Activated naive CD4-positive, alpha-beta T cell treated with anti-CD3 and anti-CD28 coated beads for 36 hours (primary cell): ENCODE measurements at regions of chr15 and their contacts with region 1.

Region 1: GRCh38 chr15:60478566-60479360 is at the start of gene ICE2:
- DNase-seq: peak; percentile 98
- H3K4me3 Mint-ChIP-seq: peak within 1 kb of the TSS; percentile 93
- H3K27ac Mint-ChIP-seq: peak within 1 kb of the TSS; percentile 94
- H3K4me1 Mint-ChIP-seq: peaks cover 44% of the 10 kb centered on the region
- H3K27me3 Mint-ChIP-seq: no peaks in the 10 kb centered on the region
- total RNA-seq, gene ICE2: 75.2 to 76.7 TPM

Region 2: GRCh38 chr15:60006203-60006862 is 472.4 kb before region 1 on chr15:
- CTCF ChIA-PET with region 1: no interaction called
- intact Hi-C with region 1: loop called (anchors 10 kb)
- DNase-seq: peak; percentile 83
- H3K4me3 Mint-ChIP-seq: peak overlapping the region; percentile 82
- H3K27ac Mint-ChIP-seq: peak overlapping the region; percentile 68
- H3K4me1 Mint-ChIP-seq: peaks cover 26% of the 10 kb centered on the region
- H3K27me3 Mint-ChIP-seq: peaks cover 87% of the 10 kb centered on the region

Region 3: DNA sequence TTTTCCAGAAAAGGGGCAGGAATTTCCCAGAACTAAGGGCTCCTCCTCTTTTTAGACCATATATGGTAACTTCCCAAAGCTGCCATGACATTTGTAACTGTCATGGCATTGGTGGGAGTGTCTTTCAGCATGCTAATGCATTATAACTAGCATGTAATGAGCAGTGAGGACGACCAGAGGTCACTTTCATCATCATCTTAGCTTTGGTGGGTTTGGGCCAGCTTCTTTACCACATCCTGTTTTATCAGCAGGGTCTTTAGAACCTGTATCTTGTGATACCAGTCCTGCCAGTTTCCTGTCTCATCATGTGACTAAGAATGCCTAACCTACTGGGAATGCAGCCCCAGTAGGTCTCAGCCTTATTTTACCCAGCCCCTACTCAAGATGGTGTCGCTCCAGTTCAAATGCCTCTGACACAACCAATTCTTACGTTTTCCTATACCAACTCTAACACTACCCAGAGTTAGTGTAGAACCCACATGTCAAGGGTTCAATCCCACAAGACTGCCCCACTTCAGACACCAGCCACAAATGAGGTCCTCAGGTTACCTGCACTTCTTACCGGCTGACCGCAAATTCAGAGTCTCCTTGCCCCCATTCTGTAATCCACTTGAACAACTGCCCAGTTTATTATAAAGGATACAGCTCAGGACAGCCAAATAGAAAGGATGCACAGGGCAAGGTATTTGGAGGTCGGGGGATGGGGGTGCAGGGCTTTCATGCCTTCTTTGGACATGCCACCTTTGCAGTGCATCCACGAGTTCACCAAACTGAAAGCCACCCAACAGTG is 457.0 kb before region 1 on chr15:
- CTCF ChIA-PET with region 1: no interaction called
- intact Hi-C with region 1: no loop called
- DNase-seq: no peak
- H3K4me3 Mint-ChIP-seq: no peak overlapping the region
- H3K27ac Mint-ChIP-seq: no peak overlapping the region
- H3K4me1 Mint-ChIP-seq: peaks cover 19% of the 10 kb centered on the region
- H3K27me3 Mint-ChIP-seq: peaks cover 7% of the 10 kb centered on the region

Region 4: GRCh38 chr15:60397772-60398445 is 80.9 kb before region 1 on chr15 and contains the start of gene ANXA2:
- CTCF ChIA-PET with region 1: no interaction called
- intact Hi-C with region 1: loop called (anchors 1 kb)
- DNase-seq: peak; percentile 80
- H3K4me3 Mint-ChIP-seq: peak within 1 kb of the TSS; percentile 72
- H3K27ac Mint-ChIP-seq: peak within 1 kb of the TSS; percentile 57
- H3K4me1 Mint-ChIP-seq: peaks cover 24% of the 10 kb centered on the region
- H3K27me3 Mint-ChIP-seq: no peaks in the 10 kb centered on the region
- total RNA-seq, gene ANXA2: 16.9 to 18.0 TPM

Region 5: DNA sequence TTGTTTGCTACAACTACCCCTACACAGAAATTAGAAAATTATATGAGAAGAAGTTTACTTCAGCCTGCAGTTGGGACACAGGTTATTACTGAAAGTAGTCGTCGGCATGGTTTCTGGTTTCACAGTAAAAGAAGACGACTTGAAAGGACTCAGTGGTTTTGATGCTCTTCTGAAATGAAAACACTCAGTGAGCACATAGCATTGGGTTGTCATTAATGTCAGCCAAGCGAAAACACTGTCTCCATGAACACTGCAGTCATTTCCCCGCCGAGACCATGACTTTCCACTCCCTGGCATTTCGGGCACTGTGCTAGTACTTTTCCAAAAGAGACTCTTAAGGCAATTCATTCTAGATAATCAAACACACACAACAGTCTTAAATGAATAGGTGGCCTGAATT is 69.3 kb after region 1 on chr15:
- CTCF ChIA-PET with region 1: interaction called, 4 read pairs
- intact Hi-C with region 1: loop called (anchors 1 kb)
- DNase-seq: peak; percentile 83
- H3K4me3 Mint-ChIP-seq: peak overlapping the region; percentile 39
- H3K27ac Mint-ChIP-seq: peak overlapping the region; percentile 80
- H3K4me1 Mint-ChIP-seq: peaks cover 92% of the 10 kb centered on the region
- H3K27me3 Mint-ChIP-seq: no peaks in the 10 kb centered on the region

Region 6: DNA sequence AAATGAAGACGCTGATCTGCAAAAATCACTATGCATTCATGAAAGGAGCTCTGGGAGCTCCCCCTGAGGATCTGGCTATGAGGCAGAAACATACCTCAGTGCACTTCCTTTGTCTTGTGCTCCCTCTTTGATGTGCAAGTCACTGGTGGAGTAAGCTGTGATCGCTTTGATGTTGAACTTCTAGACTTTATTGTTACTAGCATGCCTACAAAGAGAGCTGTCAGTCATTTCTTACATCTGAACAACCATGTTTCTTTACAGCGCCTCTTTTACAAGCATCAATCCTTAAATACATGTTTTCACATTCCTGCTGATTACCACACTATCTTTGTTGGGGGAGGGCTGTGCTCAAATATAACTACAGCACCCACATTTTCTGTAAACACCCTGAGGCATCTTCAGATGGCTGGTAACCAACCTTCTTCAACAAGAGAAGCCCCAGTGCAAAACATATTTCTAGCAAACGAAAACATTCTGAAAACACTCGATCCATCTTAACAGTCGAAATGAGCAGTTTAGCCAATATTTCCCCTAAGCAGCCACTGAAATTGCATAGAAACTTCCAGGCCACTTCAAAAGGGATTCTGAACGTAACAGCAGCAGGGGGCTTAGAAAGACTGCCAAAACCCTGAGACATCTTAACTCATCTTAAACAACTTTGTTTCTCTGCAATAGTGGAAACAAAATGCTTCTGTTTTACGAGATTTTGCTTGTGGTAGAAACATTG is 102.0 kb after region 1 on chr15:
- CTCF ChIA-PET with region 1: no interaction called
- intact Hi-C with region 1: loop called (anchors 1 kb)
- DNase-seq: peak; percentile 73
- H3K4me3 Mint-ChIP-seq: peak overlapping the region; percentile 60
- H3K27ac Mint-ChIP-seq: peak overlapping the region; percentile 85
- H3K4me1 Mint-ChIP-seq: peaks cover 90% of the 10 kb centered on the region
- H3K27me3 Mint-ChIP-seq: no peaks in the 10 kb centered on the region

Region 7: DNA sequence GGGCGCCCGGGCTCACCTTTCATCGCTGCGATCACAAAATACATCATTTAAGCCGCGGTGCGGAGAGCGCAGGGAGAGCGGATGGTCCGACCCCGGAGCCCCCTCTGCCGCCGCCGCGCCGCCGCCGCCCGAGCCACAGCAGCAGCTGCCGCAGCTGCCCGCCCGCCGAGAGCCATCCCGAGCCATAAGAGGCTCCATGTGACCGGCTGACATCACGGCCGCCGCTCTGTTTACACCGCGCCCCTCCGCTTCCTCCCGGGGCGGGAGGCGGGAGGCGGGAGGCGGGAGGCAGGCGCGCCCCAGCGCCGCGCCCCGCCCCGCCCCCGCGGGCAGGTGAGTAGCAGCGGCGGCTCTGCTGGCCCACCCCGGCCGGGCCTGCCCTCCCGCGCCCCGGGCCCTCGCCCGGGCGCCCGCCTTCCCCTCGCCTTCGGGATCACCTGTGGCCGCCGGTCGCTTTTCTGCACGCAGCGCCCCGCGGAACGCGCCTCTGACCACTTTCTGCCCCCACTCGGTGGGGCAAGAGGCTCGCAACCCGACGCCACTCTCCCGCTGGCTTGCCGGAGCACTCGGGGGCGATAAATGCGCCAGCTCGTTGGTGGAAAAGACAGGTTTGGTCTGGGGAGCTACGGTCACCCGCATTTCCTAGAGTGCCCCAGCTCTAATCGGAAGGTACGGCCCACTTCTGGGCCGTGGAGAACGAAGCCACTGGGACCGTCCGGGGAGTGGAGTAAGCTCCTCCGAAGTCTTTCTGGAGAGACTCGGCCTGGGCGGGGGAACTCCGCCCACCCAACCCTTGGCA is 113.8 kb after region 1 on chr15:
- CTCF ChIA-PET with region 1: no interaction called
- intact Hi-C with region 1: loop called (anchors 1 kb)
- DNase-seq: peak; percentile 89
- H3K4me3 Mint-ChIP-seq: peak overlapping the region; percentile 76
- H3K27ac Mint-ChIP-seq: peak overlapping the region; percentile 67
- H3K4me1 Mint-ChIP-seq: peaks cover 31% of the 10 kb centered on the region
- H3K27me3 Mint-ChIP-seq: no peaks in the 10 kb centered on the region

Region 8: DNA sequence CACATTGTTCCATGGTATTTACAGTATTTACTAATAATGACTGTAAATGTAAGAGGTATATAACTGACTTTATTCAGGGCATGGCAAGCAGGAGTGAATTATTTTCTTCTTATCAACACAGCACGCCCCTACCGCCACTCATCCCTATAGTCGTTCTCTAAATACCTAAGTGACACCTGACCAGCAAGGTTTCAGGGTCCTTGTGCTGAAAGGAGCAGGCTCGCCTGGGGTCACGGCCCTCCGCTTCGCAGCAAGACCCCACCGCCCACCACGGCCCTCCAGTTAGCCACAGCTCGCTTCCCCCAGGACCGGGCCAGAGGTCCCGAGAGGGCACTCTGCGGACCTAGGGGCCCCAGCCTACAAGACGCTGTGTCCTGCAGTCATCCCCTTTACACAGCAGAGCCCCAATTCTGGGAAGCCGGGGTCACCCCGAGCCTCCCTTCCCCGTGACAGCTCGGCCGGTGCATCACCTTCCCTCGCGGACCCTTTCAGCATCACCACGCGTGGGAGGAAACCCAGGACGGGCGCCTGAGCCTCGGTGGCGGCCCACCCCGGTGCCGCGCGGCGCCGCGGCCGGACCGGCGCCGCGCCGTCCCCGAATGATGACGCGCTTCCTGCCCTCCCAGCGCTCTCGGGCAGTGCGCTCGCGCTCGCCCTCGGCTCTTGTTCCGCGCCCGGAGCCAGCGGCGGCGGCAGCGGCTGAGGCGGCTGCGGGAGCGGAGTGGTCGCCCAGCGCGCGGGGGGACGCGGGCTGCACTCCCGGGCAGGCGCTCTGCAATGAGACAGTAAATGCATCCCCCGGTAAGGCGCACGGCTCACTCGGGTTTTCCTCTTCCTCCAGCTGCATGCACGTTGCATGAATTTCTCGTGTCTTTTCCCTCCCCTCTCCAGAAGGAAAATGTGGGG is 1911.4 kb after region 1 on chr15:
- CTCF ChIA-PET with region 1: no interaction called
- intact Hi-C with region 1: loop called (anchors 10 kb)
- DNase-seq: peak; percentile 63
- H3K4me3 Mint-ChIP-seq: peak within 1 kb of the TSS; percentile 85
- H3K27ac Mint-ChIP-seq: peak within 1 kb of the TSS; percentile 46
- H3K4me1 Mint-ChIP-seq: peaks cover 12% of the 10 kb centered on the region
- H3K27me3 Mint-ChIP-seq: peaks cover 19% of the 10 kb centered on the region